ENCODE measurements at regions of chr7 and their contacts with region 1.

Region 1: DNA sequence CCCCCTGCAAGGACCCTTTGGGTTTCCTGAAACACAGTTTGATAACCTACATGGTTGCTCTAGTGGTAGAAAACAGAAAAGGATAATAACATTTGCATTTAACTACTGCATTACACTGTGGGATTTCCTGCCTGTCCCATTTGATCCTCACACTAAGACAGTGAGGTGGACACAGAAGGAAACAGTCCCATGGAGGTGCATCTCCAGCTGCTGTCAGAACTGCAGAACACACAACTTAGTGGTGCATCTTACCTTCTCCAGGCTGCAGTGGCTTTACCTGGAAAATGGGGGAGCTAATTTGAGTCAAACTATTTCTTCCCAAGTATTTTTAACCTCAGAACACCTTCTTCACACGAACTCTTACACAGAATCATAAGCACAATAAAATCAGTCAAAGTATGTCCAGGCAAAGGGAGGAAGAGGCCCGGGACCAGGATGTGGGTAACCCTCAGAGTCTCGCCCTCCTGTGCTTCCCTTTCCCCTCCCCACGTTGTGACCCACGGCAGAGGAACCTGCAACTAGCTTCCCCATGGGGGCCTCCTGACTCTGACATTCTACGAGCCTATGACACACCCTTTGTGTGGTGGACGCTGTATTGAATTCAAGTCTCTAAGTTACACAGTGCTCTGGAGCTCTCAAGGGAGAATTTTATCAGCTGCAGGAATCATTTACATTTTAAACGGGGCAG is 33.7 kb downstream of the SCRN1 start:
- DNase-seq: no peak
- ATAC-seq: peak; percentile 92
- H3K4me3 Mint-ChIP-seq: no peak overlapping the region
- H3K27ac Mint-ChIP-seq: peak overlapping the region; percentile 72
- H3K4me1 Mint-ChIP-seq: peaks cover 29% of the 10 kb centered on the region
- H3K27me3 Mint-ChIP-seq: no peaks in the 10 kb centered on the region
- CTCF ChIP-seq: no peak

Region 2: GRCh38 chr7:29609162-29610037 is 346.5 kb before region 1 on chr7:
- CTCF ChIA-PET with region 1: no interaction called
- POLR2A ChIA-PET with region 1: no interaction called
- intact Hi-C with region 1: no loop called
- DNase-seq: no peak
- ATAC-seq: no peak
- H3K4me3 Mint-ChIP-seq: no peak overlapping the region
- H3K27ac Mint-ChIP-seq: no peak overlapping the region
- H3K4me1 Mint-ChIP-seq: no peaks in the 10 kb centered on the region
- H3K27me3 Mint-ChIP-seq: peaks cover 4% of the 10 kb centered on the region
- CTCF ChIP-seq: no peak

Region 3: DNA sequence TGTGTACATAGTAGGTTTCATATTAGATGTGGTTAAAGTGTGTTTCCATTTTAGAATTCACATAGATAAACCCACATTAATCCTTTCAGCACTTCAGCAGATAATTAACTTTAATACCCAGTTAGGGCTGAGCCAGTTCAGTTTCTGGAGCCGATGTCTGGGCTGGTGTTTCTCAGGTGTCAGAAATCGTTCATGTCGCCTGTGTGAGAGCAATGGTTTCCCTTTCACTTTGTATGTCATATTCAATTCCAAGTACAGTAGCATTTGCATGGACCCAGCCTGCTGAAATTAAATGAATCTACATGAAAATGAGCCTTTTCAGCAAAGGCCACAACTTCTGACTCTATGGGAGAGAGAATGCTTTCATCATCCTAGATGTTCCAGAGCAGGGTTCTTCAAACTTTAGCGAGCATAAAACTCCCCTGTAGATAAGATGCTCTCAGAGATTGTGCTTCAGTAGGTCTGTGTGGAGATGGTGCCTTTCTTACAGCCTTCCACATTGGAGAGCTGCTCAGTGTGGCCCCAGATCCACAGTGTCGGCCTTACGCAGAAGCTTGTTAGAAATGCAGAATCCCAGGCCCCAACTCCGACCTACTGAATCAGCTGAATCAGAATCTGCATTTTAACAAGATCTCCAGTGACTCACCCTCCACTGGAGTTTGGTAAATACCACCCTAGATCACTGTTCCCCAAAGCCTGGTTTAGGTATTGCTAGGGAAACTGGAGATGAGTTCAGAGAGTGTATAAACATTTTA is 130.0 kb before region 1 on chr7:
- CTCF ChIA-PET with region 1: no interaction called
- POLR2A ChIA-PET with region 1: no interaction called
- intact Hi-C with region 1: no loop called
- DNase-seq: no peak
- ATAC-seq: no peak
- H3K4me3 Mint-ChIP-seq: peak overlapping the region; percentile 25
- H3K27ac Mint-ChIP-seq: no peak overlapping the region
- H3K4me1 Mint-ChIP-seq: peaks cover 5% of the 10 kb centered on the region
- H3K27me3 Mint-ChIP-seq: peaks cover 22% of the 10 kb centered on the region
- CTCF ChIP-seq: no peak

Region 4: GRCh38 chr7:29988424-29989256 is 32.7 kb after region 1 on chr7:
- CTCF ChIA-PET with region 1: no interaction called
- POLR2A ChIA-PET with region 1: interaction called, 4 read pairs
- intact Hi-C with region 1: loop called (anchors 2 kb)
- DNase-seq: peak; percentile 60
- ATAC-seq: peak; percentile 27
- H3K4me3 Mint-ChIP-seq: peak overlapping the region; percentile 93
- H3K27ac Mint-ChIP-seq: peak overlapping the region; percentile 97
- H3K4me1 Mint-ChIP-seq: peaks cover 37% of the 10 kb centered on the region
- H3K27me3 Mint-ChIP-seq: no peaks in the 10 kb centered on the region
- CTCF ChIP-seq: no peak